ENCODE measurements at regions of chr17 and their contacts with region 1.

Region 1: GRCh38 chr17:81601525-81602120 is 35.3 kb downstream of the NPLOC4 start:
- DNase-seq: peak; percentile 45 to 63 (median 59)
- H3K4me3 ChIP-seq: no peak overlapping the region
- H3K4me3 Mint-ChIP-seq: no peak overlapping the region
- H3K27ac ChIP-seq: no peak overlapping the region
- H3K27ac Mint-ChIP-seq: no peak overlapping the region
- H3K4me1 ChIP-seq: peaks cover 48 to 49% of the 10 kb centered on the region in 2 donors
- H3K4me1 Mint-ChIP-seq: peaks cover 43% of the 10 kb centered on the region
- H3K27me3 ChIP-seq: no peaks in the 10 kb centered on the region
- H3K27me3 Mint-ChIP-seq: no peaks in the 10 kb centered on the region
- CTCF ChIP-seq: peak; percentile 84

Region 2: GRCh38 chr17:81253358-81254131 is 348.1 kb before region 1 on chr17:
- intact Hi-C with region 1: loop called (anchors 1 to 5 kb)
- DNase-seq: peak; percentile 37 to 59 (median 57)
- H3K4me3 ChIP-seq: no peak overlapping the region
- H3K4me3 Mint-ChIP-seq: no peak overlapping the region
- H3K27ac ChIP-seq: no peak overlapping the region
- H3K27ac Mint-ChIP-seq: peak overlapping the region in 6 of 7 donors; percentile 2 to 75 (median 38)
- H3K4me1 ChIP-seq: peaks cover 18 to 22% of the 10 kb centered on the region in 2 donors
- H3K4me1 Mint-ChIP-seq: peaks cover 27% of the 10 kb centered on the region
- H3K27me3 ChIP-seq: no peaks in the 10 kb centered on the region
- H3K27me3 Mint-ChIP-seq: peaks cover 0 to 2% (median 0%) of the 10 kb centered on the region in 3 donors
- CTCF ChIP-seq: peak; percentile 86

Region 3: GRCh38 chr17:81553018-81553615 is 48.5 kb before region 1 on chr17:
- intact Hi-C with region 1: loop called (anchors 2 to 5 kb)
- DNase-seq: peak; percentile 62 to 64 (median 63)
- H3K4me3 ChIP-seq: peak overlapping the region; percentile 79 to 93 (median 92)
- H3K4me3 Mint-ChIP-seq: peak overlapping the region; percentile 87 to 91
- H3K27ac ChIP-seq: peak overlapping the region; percentile 71 to 83
- H3K27ac Mint-ChIP-seq: peak overlapping the region; percentile 86 to 94 (median 93)
- H3K4me1 ChIP-seq: peaks cover 34 to 56% of the 10 kb centered on the region in 2 donors
- H3K4me1 Mint-ChIP-seq: peaks cover 47% of the 10 kb centered on the region
- H3K27me3 ChIP-seq: no peaks in the 10 kb centered on the region
- H3K27me3 Mint-ChIP-seq: peaks cover 0 to 1% (median 0%) of the 10 kb centered on the region in 3 donors
- CTCF ChIP-seq: no peak

Region 4: DNA sequence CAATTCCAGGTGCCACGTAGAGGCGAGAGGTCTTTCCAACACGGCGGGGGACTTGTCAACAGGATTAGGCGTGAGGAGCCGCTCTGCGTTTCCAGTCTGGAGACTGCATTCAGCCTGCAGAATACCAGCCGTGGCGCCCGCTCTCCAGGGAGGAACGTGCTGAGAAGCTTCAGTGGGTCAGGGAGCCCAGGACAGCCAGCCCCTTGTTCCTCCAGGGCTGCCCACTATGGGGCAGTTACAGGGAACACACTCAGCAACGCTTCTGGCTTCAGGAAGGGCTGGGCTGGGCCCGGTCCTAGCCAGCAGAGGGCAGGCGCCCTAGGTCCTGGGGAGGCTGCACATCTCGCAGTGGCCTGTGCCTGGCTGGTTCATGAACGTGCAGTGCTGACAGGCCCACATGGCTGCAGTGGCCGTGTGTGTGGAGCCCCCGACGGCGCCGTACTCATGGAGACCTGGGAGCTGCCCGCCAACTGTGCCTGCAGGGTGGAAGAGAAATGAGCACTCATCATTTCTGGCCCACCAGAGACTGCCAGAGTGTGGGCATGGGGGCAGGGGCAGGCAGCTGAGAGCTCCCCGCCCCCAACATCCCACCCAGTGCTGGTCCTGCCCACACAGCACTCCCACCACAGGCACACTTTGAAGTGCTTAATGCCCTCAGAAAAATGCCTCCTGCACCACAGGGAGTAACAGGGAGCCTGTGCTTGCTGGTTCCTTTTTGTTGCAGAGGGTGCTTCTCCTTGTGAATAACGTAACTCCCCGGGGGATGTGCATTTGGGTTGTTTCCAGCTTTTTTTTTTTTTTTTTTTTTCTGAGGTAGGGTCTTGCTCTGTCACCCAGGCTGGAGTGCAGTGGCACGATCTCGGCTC is 42.4 kb before region 1 on chr17:
- intact Hi-C with region 1: loop called in 1 of 2 experiments (anchors 5 kb)
- DNase-seq: peak; percentile 53 to 59 (median 57)
- H3K4me3 ChIP-seq: peak overlapping the region in 2 of 3 experiments; percentile 16 to 65
- H3K4me3 Mint-ChIP-seq: peak overlapping the region; percentile 12 to 51
- H3K27ac ChIP-seq: peak overlapping the region; percentile 80 to 94
- H3K27ac Mint-ChIP-seq: peak overlapping the region; percentile 57 to 99 (median 97)
- H3K4me1 ChIP-seq: peaks cover 68 to 87% of the 10 kb centered on the region in 2 donors
- H3K4me1 Mint-ChIP-seq: peaks cover 79% of the 10 kb centered on the region
- H3K27me3 ChIP-seq: no peaks in the 10 kb centered on the region
- H3K27me3 Mint-ChIP-seq: no peaks in the 10 kb centered on the region
- CTCF ChIP-seq: peak; percentile 77